Calu3 (cell line): ENCODE measurements at regions of chr2 and their contacts with region 1.

Region 1: GRCh38 chr2:58436872-58437271 is 195.7 kb upstream of the FANCL start:
- DNase-seq: no peak
- H3K4me3 Mint-ChIP-seq: no peak overlapping the region
- H3K27ac Mint-ChIP-seq: no peak overlapping the region
- H3K4me1 Mint-ChIP-seq: peaks cover 21% of the 10 kb centered on the region
- H3K27me3 Mint-ChIP-seq: no peaks in the 10 kb centered on the region
- CTCF ChIP-seq: no peak

Region 2: DNA sequence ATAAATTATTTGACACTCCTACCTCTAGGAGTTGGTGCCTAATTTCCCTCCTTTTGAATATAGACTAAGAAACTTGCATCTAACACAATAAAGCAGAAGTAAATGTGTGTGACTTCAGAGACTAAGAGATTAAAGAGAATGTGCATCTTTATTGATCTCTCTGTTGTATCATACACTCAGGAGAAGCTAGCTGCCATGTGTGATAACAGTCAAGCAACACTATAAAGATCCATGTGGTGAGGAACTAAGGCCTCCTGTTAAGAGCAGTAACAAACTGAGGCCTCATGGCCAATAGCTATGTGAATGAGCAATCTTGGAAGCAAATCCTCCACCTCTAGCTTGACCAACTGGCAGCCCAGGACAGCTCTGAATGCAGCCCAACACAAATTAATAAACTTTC is 199.1 kb before region 1 on chr2:
- CTCF ChIA-PET with region 1: no interaction called
- intact Hi-C with region 1: loop called (anchors 10 kb)
- DNase-seq: no peak
- H3K4me3 Mint-ChIP-seq: peak overlapping the region; percentile 9
- H3K27ac Mint-ChIP-seq: no peak overlapping the region
- H3K4me1 Mint-ChIP-seq: peaks cover 48% of the 10 kb centered on the region
- H3K27me3 Mint-ChIP-seq: no peaks in the 10 kb centered on the region
- CTCF ChIP-seq: no peak